Transverse colon (tissue), 4 donors: ENCODE measurements at regions of chr6 and their contacts with region 1.

Region 1: DNA sequence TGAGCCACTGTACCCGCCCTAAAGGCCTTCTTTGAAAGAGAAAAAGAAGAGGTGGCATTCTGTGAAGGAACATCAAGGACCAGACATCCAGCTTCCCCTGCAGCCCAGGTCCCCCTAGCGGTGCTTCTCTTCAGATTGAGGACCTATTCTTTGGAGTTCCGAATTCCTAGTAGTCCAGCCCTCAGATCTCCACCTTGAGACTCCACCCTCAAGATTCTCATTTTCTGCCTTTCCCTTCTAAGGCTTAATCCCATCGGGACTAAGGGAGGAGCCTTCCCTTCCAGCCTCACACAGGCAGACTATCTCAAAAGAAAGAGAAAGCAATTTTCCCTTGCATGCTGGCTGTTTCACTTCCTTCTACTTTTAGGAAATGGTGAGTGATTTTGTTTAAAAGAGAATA is 32.5 kb downstream of the MUC22 start:
- DNase-seq: peak; percentile 26
- H3K4me3 ChIP-seq: no peak overlapping the region
- H3K27ac ChIP-seq: no peak overlapping the region
- H3K4me1 ChIP-seq: peaks cover 0 to 3% (median 0%) of the 10 kb centered on the region in 4 donors
- H3K27me3 ChIP-seq: peaks cover 22% of the 10 kb centered on the region
- CTCF ChIP-seq: peak in 3 of 5 experiments; percentile 24 to 41 (median 34)
- EP300 ChIP-seq: no peak
- POLR2A ChIP-seq: no peak

Region 2: DNA sequence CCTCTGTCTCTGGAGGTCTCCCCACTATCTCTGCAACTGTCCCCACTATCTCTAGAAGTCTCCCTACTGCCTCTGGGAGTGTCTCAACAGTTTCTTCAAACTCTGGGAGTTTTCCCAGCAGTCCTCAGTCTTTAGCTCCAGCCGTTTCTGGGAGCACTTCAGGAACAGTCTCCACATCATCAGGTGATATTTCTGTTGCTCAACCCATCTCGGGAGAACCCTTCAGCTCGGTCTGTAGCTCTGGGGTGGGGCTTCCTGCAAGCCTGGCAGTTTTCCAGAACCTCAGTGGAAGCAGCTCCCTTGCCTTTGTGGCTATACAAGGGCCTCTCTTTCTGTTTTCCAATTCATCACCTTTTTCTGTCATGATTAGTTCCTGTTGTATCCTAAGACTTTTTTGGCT is 107.8 kb before region 1 on chr6:
- in situ Hi-C with region 1: loop called in 1 of 4 experiments (anchors 10 kb)
- intact Hi-C with region 1: no loop called
- DNase-seq: no peak
- H3K4me3 ChIP-seq: no peak overlapping the region
- H3K27ac ChIP-seq: no peak overlapping the region
- H3K4me1 ChIP-seq: no peaks in the 10 kb centered on the region
- H3K27me3 ChIP-seq: peaks cover 12% of the 10 kb centered on the region
- CTCF ChIP-seq: no peak
- EP300 ChIP-seq: no peak
- POLR2A ChIP-seq: no peak